A549 (cell line): ENCODE measurements at regions of chr10 and their contacts with region 1.

Region 1: GRCh38 chr10:33193057-33193700 is 141.3 kb downstream of the NRP1 start:
- DNase-seq: peak; percentile 75 to 93
- ATAC-seq: peak; percentile 78 to 80
- H3K4me3 ChIP-seq: no peak overlapping the region
- H3K27ac ChIP-seq: peak overlapping the region; percentile 79 to 86
- H3K4me1 ChIP-seq: peaks cover 57% of the 10 kb centered on the region
- CTCF ChIP-seq: peak; percentile 93
- EP300 ChIP-seq: no peak
- POLR2A ChIP-seq: no peak
- RAD21 ChIP-seq: peak; percentile 94 to 95

Region 2: GRCh38 chr10:33115738-33116719 is 77.2 kb before region 1 on chr10:
- CTCF ChIA-PET with region 1: interaction called, 12 read pairs
- POLR2A ChIA-PET with region 1: no interaction called
- DNase-seq: peak in 1 of 2 experiments; percentile 67
- ATAC-seq: peak; percentile 67 to 82; a peak in 5 of 6 replicates
- H3K4me3 ChIP-seq: no peak overlapping the region
- H3K27ac ChIP-seq: peak overlapping the region; percentile 68 to 84
- H3K4me1 ChIP-seq: peaks cover 38% of the 10 kb centered on the region
- CTCF ChIP-seq: peak; percentile 64
- EP300 ChIP-seq: no peak
- POLR2A ChIP-seq: no peak
- RAD21 ChIP-seq: peak; percentile 58 to 69

Region 3: GRCh38 chr10:33211106-33211878 is 18.1 kb after region 1 on chr10:
- CTCF ChIA-PET with region 1: interaction called, 44 read pairs
- POLR2A ChIA-PET with region 1: no interaction called
- DNase-seq: no peak
- ATAC-seq: peak in 1 of 2 experiments; percentile 35; a peak in 3 of 6 replicates
- H3K4me3 ChIP-seq: no peak overlapping the region
- H3K27ac ChIP-seq: peak overlapping the region; percentile 4 to 60; a peak in 3 of 6 replicates
- H3K4me1 ChIP-seq: peaks cover 29% of the 10 kb centered on the region
- CTCF ChIP-seq: no peak
- EP300 ChIP-seq: no peak
- POLR2A ChIP-seq: no peak
- RAD21 ChIP-seq: no peak

Region 4: GRCh38 chr10:33252324-33253203 is 59.4 kb after region 1 on chr10:
- CTCF ChIA-PET with region 1: interaction called, 24 read pairs
- POLR2A ChIA-PET with region 1: no interaction called
- DNase-seq: peak; percentile 43 to 66
- ATAC-seq: peak; percentile 53 to 71
- H3K4me3 ChIP-seq: no peak overlapping the region
- H3K27ac ChIP-seq: peak overlapping the region; percentile 87 to 89
- H3K4me1 ChIP-seq: peaks cover 80% of the 10 kb centered on the region
- CTCF ChIP-seq: no peak
- EP300 ChIP-seq: peak; percentile 63 to 76; a peak in 2 of 5 replicates
- POLR2A ChIP-seq: no peak
- RAD21 ChIP-seq: peak; percentile 1 to 31; a peak in 1 of 5 replicates

Region 5: DNA sequence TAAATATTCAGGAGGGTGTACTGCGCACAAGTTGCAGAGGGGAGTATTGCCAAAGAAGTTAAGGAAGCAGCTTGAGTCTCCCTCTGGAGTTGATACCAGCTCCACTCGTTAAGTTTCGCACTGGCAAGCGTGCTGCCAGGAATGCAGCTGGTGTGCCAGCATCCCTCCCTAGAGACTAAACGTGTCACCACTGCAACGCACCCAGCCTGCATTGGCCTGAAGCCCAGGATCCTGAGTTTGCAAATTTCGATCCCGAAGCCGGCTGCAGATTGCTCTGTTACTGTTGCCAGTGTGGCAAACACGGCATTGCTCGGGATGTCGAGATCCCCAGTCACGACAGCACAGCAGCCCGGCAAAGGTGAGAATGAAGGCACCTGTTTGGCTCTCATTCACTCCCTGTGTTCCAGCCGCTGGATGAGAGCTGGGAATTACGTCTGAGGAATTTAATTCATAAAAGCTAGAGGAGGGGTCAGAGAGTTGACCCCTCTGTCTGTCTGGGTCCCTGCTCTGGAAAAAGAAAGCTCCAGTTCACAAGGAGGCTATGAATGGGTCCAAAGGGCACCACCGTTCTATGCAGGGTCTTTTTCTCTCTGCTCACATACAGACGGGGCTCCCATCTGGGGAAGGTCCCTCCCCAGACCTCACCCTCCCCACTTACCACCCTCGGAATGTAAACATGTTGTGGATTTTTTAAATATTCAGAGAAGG is 80.3 kb after region 1 on chr10:
- CTCF ChIA-PET with region 1: interaction called, 27 read pairs
- POLR2A ChIA-PET with region 1: interaction called, 9 read pairs
- DNase-seq: peak; percentile 78 to 98
- ATAC-seq: peak; percentile 89 to 92
- H3K4me3 ChIP-seq: peak overlapping the region; percentile 16; the same call in 2 of the 3 replicates
- H3K27ac ChIP-seq: peak overlapping the region; percentile 92 to 98
- H3K4me1 ChIP-seq: peaks cover 91% of the 10 kb centered on the region
- CTCF ChIP-seq: no peak
- EP300 ChIP-seq: peak; percentile 84 to 93; a peak in 4 of 5 replicates
- POLR2A ChIP-seq: no peak; the same call in 1 of the 2 replicates
- RAD21 ChIP-seq: peak; percentile 59 to 64; a peak in 4 of 5 replicates

Region 6: GRCh38 chr10:33330543-33331378 is 137.6 kb after region 1 on chr10:
- CTCF ChIA-PET with region 1: interaction called, 19 read pairs
- POLR2A ChIA-PET with region 1: interaction called, 6 read pairs
- DNase-seq: peak; percentile 60 to 87
- ATAC-seq: peak in 1 of 2 experiments; percentile 36; a peak in 3 of 6 replicates
- H3K4me3 ChIP-seq: peak overlapping the region; percentile 85
- H3K27ac ChIP-seq: peak overlapping the region; percentile 99
- H3K4me1 ChIP-seq: peaks cover 46% of the 10 kb centered on the region
- CTCF ChIP-seq: peak; percentile 92
- EP300 ChIP-seq: no peak
- POLR2A ChIP-seq: no peak
- RAD21 ChIP-seq: peak; percentile 89 to 92